ENCODE measurements at regions of chr6 and their contacts with region 1.

Region 1: GRCh38 chr6:136643850-136644596 is 93.8 kb upstream of the MAP7 start:
- DNase-seq: peak; percentile 96
- ATAC-seq: peak; percentile 98
- H3K4me3 Mint-ChIP-seq: no peak overlapping the region
- H3K27ac Mint-ChIP-seq: no peak overlapping the region
- H3K4me1 Mint-ChIP-seq: peaks cover 15% of the 10 kb centered on the region
- H3K27me3 Mint-ChIP-seq: no peaks in the 10 kb centered on the region
- CTCF ChIP-seq: peak; percentile 84

Region 2: GRCh38 chr6:136613477-136613876 is 30.5 kb before region 1 on chr6:
- CTCF ChIA-PET with region 1: interaction called, 16 read pairs
- POLR2A ChIA-PET with region 1: no interaction called
- DNase-seq: no peak
- ATAC-seq: no peak
- H3K4me3 Mint-ChIP-seq: no peak overlapping the region
- H3K27ac Mint-ChIP-seq: no peak overlapping the region
- H3K4me1 Mint-ChIP-seq: peaks cover 61% of the 10 kb centered on the region
- H3K27me3 Mint-ChIP-seq: no peaks in the 10 kb centered on the region
- CTCF ChIP-seq: no peak

Region 3: GRCh38 chr6:136657666-136658065 is 13.6 kb after region 1 on chr6:
- CTCF ChIA-PET with region 1: interaction called, 18 read pairs
- POLR2A ChIA-PET with region 1: interaction called, 3 read pairs
- DNase-seq: no peak
- ATAC-seq: no peak
- H3K4me3 Mint-ChIP-seq: no peak overlapping the region
- H3K27ac Mint-ChIP-seq: no peak overlapping the region
- H3K4me1 Mint-ChIP-seq: no peaks in the 10 kb centered on the region
- H3K27me3 Mint-ChIP-seq: no peaks in the 10 kb centered on the region
- CTCF ChIP-seq: no peak

Region 4: DNA sequence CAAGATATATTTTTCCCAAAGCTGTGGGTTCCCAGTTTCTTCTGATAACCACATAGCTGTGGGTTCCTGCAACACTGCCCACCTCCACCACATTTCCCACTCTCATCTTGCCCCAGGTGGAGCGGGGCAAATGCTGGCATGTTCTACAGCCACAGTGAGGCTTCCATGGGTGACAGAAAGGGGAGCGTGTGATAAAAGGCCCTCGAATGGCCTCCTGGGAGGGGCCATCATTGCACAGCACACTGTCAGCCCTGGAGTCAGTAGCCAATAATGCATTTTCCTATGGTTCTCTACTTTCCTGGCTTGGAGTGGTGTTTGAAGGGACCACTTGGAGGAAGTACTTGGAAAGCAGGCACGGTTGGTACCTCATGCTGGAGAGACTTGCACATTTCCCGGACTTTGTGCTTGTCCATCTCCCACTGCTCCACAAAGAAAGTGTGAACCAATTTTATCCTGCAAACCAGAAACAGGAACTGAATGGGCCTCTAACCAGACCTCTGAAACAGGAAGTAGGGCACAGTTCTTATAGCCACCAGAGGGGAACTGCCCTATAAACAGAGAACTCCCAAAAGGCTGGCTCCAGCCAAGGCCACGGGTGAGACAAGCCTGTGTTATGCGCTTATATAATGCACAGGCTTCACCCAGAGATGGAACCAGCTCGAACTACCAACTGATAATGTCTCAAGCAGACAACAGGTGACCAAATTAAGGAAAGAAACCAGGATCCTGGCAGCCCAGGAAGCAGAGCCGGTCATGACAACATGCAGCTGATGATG is 139.7 kb after region 1 on chr6:
- CTCF ChIA-PET with region 1: interaction called, 15 read pairs
- POLR2A ChIA-PET with region 1: no interaction called
- DNase-seq: no peak
- ATAC-seq: no peak
- H3K4me3 Mint-ChIP-seq: no peak overlapping the region
- H3K27ac Mint-ChIP-seq: no peak overlapping the region
- H3K4me1 Mint-ChIP-seq: peaks cover 6% of the 10 kb centered on the region
- H3K27me3 Mint-ChIP-seq: peaks cover 7% of the 10 kb centered on the region
- CTCF ChIP-seq: no peak

Region 5: DNA sequence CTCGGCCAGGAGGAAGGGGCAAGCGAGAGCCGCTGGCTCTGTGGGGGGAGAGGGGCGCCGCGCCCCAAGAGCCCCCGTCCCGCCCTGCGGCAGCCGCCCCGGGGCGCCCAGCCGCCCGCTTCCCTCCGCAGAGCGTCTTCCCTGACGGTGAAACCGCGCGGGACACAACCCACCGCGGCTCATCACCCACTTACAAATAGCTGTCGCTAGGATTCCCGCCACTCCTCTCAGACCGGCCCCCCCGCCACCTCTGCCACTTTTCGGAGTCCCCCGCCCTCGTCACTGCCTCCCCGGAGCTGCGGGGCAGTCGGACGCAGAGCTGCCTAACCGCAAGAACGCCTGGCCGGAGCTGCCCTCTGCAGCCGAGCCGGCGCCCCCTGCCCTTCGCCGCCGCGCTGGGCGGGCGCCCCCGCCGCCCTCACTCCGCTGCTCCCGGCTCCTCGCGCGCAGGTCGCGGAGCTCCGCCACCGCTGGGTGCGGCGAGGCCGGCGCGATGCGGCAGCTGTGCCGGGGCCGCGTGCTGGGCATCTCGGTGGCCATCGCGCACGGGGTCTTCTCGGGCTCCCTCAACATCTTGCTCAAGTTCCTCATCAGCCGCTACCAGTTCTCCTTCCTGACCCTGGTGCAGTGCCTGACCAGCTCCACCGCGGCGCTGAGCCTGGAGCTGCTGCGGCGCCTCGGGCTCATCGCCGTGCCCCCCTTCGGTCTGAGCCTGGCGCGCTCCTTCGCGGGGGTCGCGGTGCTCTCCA is 278.1 kb after region 1 on chr6 and contains the start of gene SLC35D3:
- CTCF ChIA-PET with region 1: interaction called, 18 read pairs
- POLR2A ChIA-PET with region 1: no interaction called
- DNase-seq: peak; percentile 43
- ATAC-seq: peak; percentile 46
- H3K4me3 Mint-ChIP-seq: peak within 1 kb of the TSS; percentile 77
- H3K27ac Mint-ChIP-seq: no peak within 1 kb of the TSS
- H3K4me1 Mint-ChIP-seq: peaks cover 20% of the 10 kb centered on the region
- H3K27me3 Mint-ChIP-seq: peaks cover 73% of the 10 kb centered on the region
- CTCF ChIP-seq: no peak
- total RNA-seq, gene SLC35D3: 0.37 to 0.78 TPM (median 0.39 TPM) in 3 replicates

Region 6: GRCh38 chr6:136945711-136946121 is 301.7 kb after region 1 on chr6:
- CTCF ChIA-PET with region 1: no interaction called
- POLR2A ChIA-PET with region 1: no interaction called
- DNase-seq: no peak
- ATAC-seq: no peak
- H3K4me3 Mint-ChIP-seq: no peak overlapping the region
- H3K27ac Mint-ChIP-seq: no peak overlapping the region
- H3K4me1 Mint-ChIP-seq: peaks cover 19% of the 10 kb centered on the region
- H3K27me3 Mint-ChIP-seq: peaks cover 5% of the 10 kb centered on the region
- CTCF ChIP-seq: no peak

Measured in WTC11 (cell line).